ENCODE measurements at regions of chr15 and their contacts with region 1.

Region 1: DNA sequence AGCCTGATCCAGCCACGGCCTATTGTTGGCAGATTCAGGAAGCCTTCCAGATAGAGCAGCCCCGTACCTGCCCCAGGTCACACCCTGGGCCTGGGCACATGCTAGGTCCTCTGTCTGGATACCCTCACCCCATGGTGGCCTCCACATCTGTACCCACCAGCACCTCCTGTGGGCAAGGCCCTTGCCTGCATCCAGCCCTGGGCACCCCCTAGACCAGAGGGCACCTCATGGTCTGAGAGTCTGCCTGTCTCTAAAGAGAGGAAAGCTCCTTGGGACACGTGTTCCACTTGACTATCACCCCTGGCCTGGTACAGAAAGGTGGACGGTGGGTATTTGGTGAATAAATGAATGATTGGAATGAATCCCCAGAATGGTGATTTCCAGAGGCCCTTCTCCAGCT is 8.9 kb upstream of the COMMD4 start:
- DNase-seq: no peak
- ATAC-seq: no peak
- H3K4me3 ChIP-seq: no peak overlapping the region
- H3K27ac ChIP-seq: no peak overlapping the region
- H3K4me1 ChIP-seq: no peaks in the 10 kb centered on the region
- H3K27me3 ChIP-seq: no peaks in the 10 kb centered on the region
- CTCF ChIP-seq: no peak
- POLR2A ChIP-seq: no peak

Region 2: DNA sequence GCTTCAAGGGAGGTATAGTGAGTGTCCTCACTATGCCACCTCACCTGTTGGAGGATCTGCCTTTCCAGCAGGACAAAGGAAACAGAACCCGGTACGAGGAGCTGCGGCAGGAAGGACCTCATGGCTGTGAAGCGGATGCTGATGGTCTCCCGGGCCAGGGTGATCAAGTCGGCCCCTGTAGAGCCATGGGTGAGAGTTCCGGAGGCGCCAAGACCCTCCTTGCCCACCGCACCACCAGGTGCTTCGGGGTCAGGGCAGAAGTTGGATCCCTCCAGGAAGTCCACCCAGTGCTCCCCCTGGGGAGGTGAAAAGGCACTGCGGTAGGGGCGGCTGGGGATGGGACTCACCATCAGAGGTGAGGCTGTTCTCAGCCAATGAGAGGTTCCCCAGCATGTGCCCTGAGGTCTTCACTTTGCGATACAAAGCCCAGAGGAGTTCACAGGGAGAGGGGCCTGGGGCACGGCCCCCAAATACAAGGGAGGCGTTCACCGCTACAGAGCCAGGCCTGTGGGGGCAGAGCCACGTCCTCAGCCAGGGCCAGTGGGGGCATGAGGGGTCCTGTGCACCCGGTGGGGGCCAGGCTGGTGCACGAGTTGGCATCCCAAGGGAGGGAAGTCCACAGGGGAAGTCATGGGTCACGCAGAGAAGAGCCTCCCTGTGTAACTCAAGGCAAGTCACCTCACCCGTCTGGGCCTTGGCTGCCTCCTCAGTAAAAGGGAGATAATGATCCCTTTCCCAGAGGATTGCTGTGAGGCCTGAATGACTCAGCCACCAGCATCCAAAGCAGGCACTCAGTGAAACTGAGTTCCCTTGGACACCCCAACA is 97.6 kb before region 1 on chr15:
- intact Hi-C with region 1: loop called in 2 of 10 experiments (anchors 10 kb)
- DNase-seq: peak in 1 of 5 donors; percentile 13
- ATAC-seq: no peak
- H3K4me3 ChIP-seq: no peak overlapping the region
- H3K27ac ChIP-seq: no peak overlapping the region
- H3K4me1 ChIP-seq: peaks cover 0 to 8% (median 0%) of the 10 kb centered on the region in 12 donors
- H3K27me3 ChIP-seq: peaks cover 0 to 10% (median 0%) of the 10 kb centered on the region in 9 donors
- CTCF ChIP-seq: no peak
- POLR2A ChIP-seq: no peak

Region 3: GRCh38 chr15:75431682-75432081 is 104.7 kb after region 1 on chr15:
- intact Hi-C with region 1: no loop called
- DNase-seq: no peak
- ATAC-seq: no peak
- H3K4me3 ChIP-seq: no peak overlapping the region
- H3K27ac ChIP-seq: no peak overlapping the region
- H3K4me1 ChIP-seq: peaks cover 0 to 13% (median 2%) of the 10 kb centered on the region in 12 donors
- H3K27me3 ChIP-seq: no peaks in the 10 kb centered on the region
- CTCF ChIP-seq: no peak
- POLR2A ChIP-seq: no peak